PC-9 (cell line): ENCODE measurements at regions of chr20 and their contacts with region 1.

Region 1: GRCh38 chr20:43691928-43692524 is 25.1 kb downstream of the MYBL2 start:
- DNase-seq: peak; percentile 45 to 60
- H3K4me3 ChIP-seq: no peak overlapping the region
- H3K27ac ChIP-seq: no peak overlapping the region
- H3K4me1 ChIP-seq: no peaks in the 10 kb centered on the region
- H3K27me3 ChIP-seq: no peaks in the 10 kb centered on the region
- CTCF ChIP-seq: peak; percentile 85

Region 2: GRCh38 chr20:43448748-43449535 is 243.1 kb before region 1 on chr20:
- CTCF ChIA-PET with region 1: interaction called, 15 read pairs
- POLR2A ChIA-PET with region 1: no interaction called
- intact Hi-C with region 1: loop called (anchors 1 kb)
- DNase-seq: peak in 1 of 2 experiments; percentile 59
- H3K4me3 ChIP-seq: no peak overlapping the region
- H3K27ac ChIP-seq: no peak overlapping the region
- H3K4me1 ChIP-seq: no peaks in the 10 kb centered on the region
- H3K27me3 ChIP-seq: peaks cover 5% of the 10 kb centered on the region
- CTCF ChIP-seq: peak; percentile 92

Region 3: DNA sequence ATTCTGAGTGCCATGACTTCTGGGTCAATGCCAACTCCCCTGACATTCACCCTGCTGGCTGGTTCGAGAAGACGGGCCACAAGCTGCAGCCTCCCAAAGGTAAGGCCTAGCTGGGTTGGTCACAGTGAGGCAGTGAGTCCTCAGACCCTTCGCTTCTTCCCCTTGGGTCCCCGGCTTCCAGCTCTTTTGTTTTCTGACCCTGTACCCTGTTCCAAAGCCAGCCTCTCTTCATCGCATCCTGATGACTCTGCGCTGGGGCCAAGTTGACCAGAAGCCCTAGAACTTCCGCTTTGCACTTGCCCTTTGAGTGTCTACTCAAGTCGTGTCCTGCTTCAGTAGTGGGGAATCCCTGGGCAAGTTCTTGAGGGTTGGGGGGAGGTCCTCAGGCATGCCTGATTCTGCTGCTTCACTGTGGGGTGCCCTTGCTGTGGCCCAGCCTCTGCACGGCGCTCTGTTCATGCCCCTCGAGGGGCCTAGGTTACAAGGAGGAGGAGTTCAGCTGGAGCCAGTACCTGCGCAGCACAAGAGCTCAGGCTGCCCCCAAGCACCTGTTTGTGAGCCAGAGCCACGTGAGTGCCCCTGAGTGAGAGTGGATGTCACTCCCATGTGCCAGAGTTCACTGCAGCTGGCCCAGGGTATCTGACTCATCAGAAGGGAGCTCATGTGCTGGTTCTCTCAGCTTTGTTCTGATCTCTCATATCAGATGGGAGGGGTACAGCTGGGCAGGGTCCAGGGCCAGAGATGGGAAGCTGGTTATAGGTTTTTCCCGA is 161.5 kb before region 1 on chr20:
- CTCF ChIA-PET with region 1: interaction called, 10 read pairs
- POLR2A ChIA-PET with region 1: no interaction called
- intact Hi-C with region 1: no loop called
- DNase-seq: no peak
- H3K4me3 ChIP-seq: no peak overlapping the region
- H3K27ac ChIP-seq: no peak overlapping the region
- H3K4me1 ChIP-seq: no peaks in the 10 kb centered on the region
- H3K27me3 ChIP-seq: no peaks in the 10 kb centered on the region
- CTCF ChIP-seq: no peak

Region 4: GRCh38 chr20:43537921-43538877 is 153.8 kb before region 1 on chr20:
- CTCF ChIA-PET with region 1: interaction called, 6 read pairs
- POLR2A ChIA-PET with region 1: no interaction called
- intact Hi-C with region 1: loop called (anchors 1 kb)
- DNase-seq: peak; percentile 46 to 65
- H3K4me3 ChIP-seq: no peak overlapping the region
- H3K27ac ChIP-seq: no peak overlapping the region
- H3K4me1 ChIP-seq: peaks cover 13% of the 10 kb centered on the region
- H3K27me3 ChIP-seq: no peaks in the 10 kb centered on the region
- CTCF ChIP-seq: peak; percentile 98

Region 5: GRCh38 chr20:43590392-43591323 is 101.4 kb before region 1 on chr20 and contains the start of gene IFT52:
- CTCF ChIA-PET with region 1: no interaction called
- POLR2A ChIA-PET with region 1: interaction called, 13 read pairs
- intact Hi-C with region 1: no loop called
- DNase-seq: peak; percentile 87 to 93
- H3K4me3 ChIP-seq: peak within 1 kb of the TSS; percentile 81
- H3K27ac ChIP-seq: peak within 1 kb of the TSS; percentile 44
- H3K4me1 ChIP-seq: peaks cover 19% of the 10 kb centered on the region
- H3K27me3 ChIP-seq: no peaks in the 10 kb centered on the region
- CTCF ChIP-seq: no peak
- total RNA-seq, gene IFT52: 43.2 and 46.4 TPM in 2 replicates

Region 6: GRCh38 chr20:43666376-43667328 is 25.4 kb before region 1 on chr20 and contains the start of gene MYBL2:
- CTCF ChIA-PET with region 1: no interaction called
- POLR2A ChIA-PET with region 1: interaction called, 13 read pairs
- intact Hi-C with region 1: no loop called
- DNase-seq: peak; percentile 40 to 72
- H3K4me3 ChIP-seq: peak within 1 kb of the TSS; percentile 70
- H3K27ac ChIP-seq: no peak within 1 kb of the TSS
- H3K4me1 ChIP-seq: peaks cover 33% of the 10 kb centered on the region
- H3K27me3 ChIP-seq: no peaks in the 10 kb centered on the region
- CTCF ChIP-seq: no peak
- total RNA-seq, gene MYBL2: 124 and 152 TPM in 2 replicates